K562 (cell line): ENCODE measurements at regions of chr2 and their contacts with region 1.

Region 1: GRCh38 chr2:9003616-9004337 is at the start of gene MBOAT2:
- DNase-seq: peak; percentile 95 to 99 (median 98)
- ATAC-seq: peak; percentile 87
- H3K4me3 ChIP-seq: peak within 1 kb of the TSS; percentile 68
- H3K27ac ChIP-seq: peak within 1 kb of the TSS; percentile 87
- H3K4me1 ChIP-seq: peaks cover 23 to 30% of the 10 kb centered on the region in 2 experiments; a peak in 4 of 5 replicates
- H3K27me3 ChIP-seq: no peaks in the 10 kb centered on the region
- CTCF ChIP-seq: no peak
- EP300 ChIP-seq: no peak
- POLR2A ChIP-seq: peak; percentile 87
- RAD21 ChIP-seq: no peak
- polyA plus RNA-seq, gene MBOAT2: 8.4 to 11.2 TPM

Region 2: DNA sequence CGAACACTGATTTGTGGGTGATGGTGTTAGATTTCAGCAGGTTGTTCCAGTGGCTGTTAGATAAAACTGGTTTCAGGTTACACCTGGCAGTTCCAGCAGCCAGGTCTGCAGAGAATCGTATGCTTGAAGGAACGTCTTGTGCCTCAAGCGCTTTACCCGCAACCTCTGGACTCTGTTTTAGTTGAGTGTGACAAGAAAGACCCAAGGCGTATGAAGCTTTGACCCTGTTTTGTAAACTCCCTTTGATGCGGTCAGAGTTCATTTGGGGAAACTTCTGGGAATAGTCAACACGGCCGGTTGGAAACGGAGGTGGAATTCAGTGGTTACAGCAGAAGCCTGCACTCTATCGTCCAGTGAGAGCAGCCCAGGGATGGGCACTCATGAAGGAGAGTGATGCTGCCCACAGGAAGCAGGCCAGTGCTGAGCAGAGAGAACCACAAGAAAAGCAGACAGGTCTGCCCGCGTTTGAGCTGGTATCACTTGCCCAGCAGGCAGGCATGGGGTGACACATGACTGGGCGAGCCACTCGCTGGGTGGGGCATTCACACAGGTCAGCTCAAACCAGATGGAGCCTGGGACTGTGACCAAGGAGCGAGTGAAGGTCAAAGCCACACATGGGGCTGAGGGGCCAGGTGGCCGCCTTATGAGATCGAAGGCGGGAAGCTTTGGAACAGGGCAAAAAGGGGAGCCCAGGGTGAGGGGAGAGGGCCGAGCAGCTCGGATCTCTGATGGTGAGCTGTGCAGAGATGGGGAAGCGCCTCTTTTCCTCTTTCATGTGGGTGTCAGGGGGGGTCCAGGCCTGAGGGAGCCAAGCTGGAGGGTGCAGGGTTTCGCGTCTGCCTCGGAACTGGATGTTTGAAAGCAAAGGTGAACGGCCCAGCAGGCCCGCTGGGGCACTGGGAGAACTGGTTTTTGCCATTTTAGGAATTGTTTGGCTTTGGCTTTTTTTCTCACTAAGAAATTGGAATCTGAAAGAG is 99.4 kb after region 1 on chr2:
- CTCF ChIA-PET with region 1: no interaction called
- POLR2A ChIA-PET with region 1: no interaction called
- in situ Hi-C with region 1: no loop called
- intact Hi-C with region 1: loop called (anchors 5 kb)
- DNase-seq: no peak
- ATAC-seq: peak; percentile 11; the same call in 1 of the 3 replicates
- H3K4me3 ChIP-seq: no peak overlapping the region
- H3K27ac ChIP-seq: no peak overlapping the region
- H3K4me1 ChIP-seq: peaks cover 0 to 17% of the 10 kb centered on the region in 2 experiments; a peak in 2 of 5 replicates
- H3K27me3 ChIP-seq: no peaks in the 10 kb centered on the region
- CTCF ChIP-seq: no peak
- EP300 ChIP-seq: no peak
- POLR2A ChIP-seq: no peak
- RAD21 ChIP-seq: no peak

Region 3: DNA sequence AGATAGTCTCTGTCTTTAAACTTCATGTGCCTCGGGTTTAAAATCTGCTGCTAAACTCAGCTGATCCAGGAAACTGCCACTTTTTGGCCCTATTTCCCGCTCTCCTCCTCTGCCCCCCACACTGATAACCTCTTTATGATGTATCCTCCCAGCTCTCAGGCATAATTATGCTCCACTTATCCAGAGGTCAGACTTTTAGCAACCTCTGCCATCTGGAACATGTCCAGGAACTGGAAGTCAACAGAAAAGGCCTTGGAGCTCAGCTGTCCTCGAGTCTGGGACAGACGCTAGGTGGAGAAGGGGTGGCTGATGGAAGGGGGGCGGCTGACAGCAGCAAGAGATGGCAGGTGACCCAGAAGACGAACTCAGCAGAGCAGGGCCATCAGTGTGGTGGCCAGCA is 244.0 kb after region 1 on chr2:
- CTCF ChIA-PET with region 1: no interaction called
- POLR2A ChIA-PET with region 1: no interaction called
- in situ Hi-C with region 1: no loop called
- intact Hi-C with region 1: no loop called
- DNase-seq: no peak
- ATAC-seq: no peak
- H3K4me3 ChIP-seq: no peak overlapping the region
- H3K27ac ChIP-seq: no peak overlapping the region
- H3K4me1 ChIP-seq: peaks cover 0 to 3% of the 10 kb centered on the region in 2 experiments; a peak in 3 of 5 replicates
- H3K27me3 ChIP-seq: peaks cover 4 to 64% of the 10 kb centered on the region in 2 experiments
- CTCF ChIP-seq: no peak
- EP300 ChIP-seq: no peak
- POLR2A ChIP-seq: no peak
- RAD21 ChIP-seq: no peak